ENCODE measurements at regions of chr7 and their contacts with region 1.

Region 1: GRCh38 chr7:31744294-31744874 is 57.4 kb downstream of the PPP1R17 start:
- DNase-seq: no peak
- H3K4me3 ChIP-seq: no peak overlapping the region
- H3K27ac ChIP-seq: no peak overlapping the region
- H3K4me1 ChIP-seq: no peaks in the 10 kb centered on the region
- H3K27me3 ChIP-seq: no peaks in the 10 kb centered on the region
- CTCF ChIP-seq: peak; percentile 54 to 85 (median 74)
- POLR2A ChIP-seq: no peak

Region 2: GRCh38 chr7:31938653-31939052 is 194.3 kb after region 1 on chr7:
- intact Hi-C with region 1: no loop called
- DNase-seq: no peak
- H3K4me3 ChIP-seq: no peak overlapping the region
- H3K27ac ChIP-seq: no peak overlapping the region
- H3K4me1 ChIP-seq: no peaks in the 10 kb centered on the region
- H3K27me3 ChIP-seq: no peaks in the 10 kb centered on the region
- CTCF ChIP-seq: no peak
- POLR2A ChIP-seq: no peak

Region 3: GRCh38 chr7:32204361-32205018 is 460.1 kb after region 1 on chr7:
- intact Hi-C with region 1: loop called (anchors 2 kb)
- DNase-seq: peak; percentile 55 to 87
- H3K4me3 ChIP-seq: peak overlapping the region in 1 of 2 donors; percentile 29
- H3K27ac ChIP-seq: no peak overlapping the region
- H3K4me1 ChIP-seq: no peaks in the 10 kb centered on the region
- H3K27me3 ChIP-seq: no peaks in the 10 kb centered on the region
- CTCF ChIP-seq: peak in 2 of 3 experiments; percentile 54 to 74
- POLR2A ChIP-seq: no peak

Region 4: GRCh38 chr7:32347244-32347828 is 603.0 kb after region 1 on chr7:
- intact Hi-C with region 1: loop called (anchors 10 kb)
- DNase-seq: no peak
- H3K4me3 ChIP-seq: no peak overlapping the region
- H3K27ac ChIP-seq: no peak overlapping the region
- H3K4me1 ChIP-seq: no peaks in the 10 kb centered on the region
- H3K27me3 ChIP-seq: no peaks in the 10 kb centered on the region
- CTCF ChIP-seq: peak in 2 of 3 experiments; percentile 24 to 44
- POLR2A ChIP-seq: no peak